A549 (cell line): ENCODE measurements at regions of chr1 and their contacts with region 1.

Region 1: GRCh38 chr1:235160957-235161684 is at the start of gene RBM34:
- DNase-seq: peak; percentile 89 to 93
- ATAC-seq: peak; percentile 96
- H3K4me3 ChIP-seq: peak within 1 kb of the TSS; percentile 79
- H3K27ac ChIP-seq: peak within 1 kb of the TSS; percentile 88 to 90
- H3K4me1 ChIP-seq: peaks cover 17% of the 10 kb centered on the region; the same call in 2 of the 3 replicates
- CTCF ChIP-seq: no peak
- EP300 ChIP-seq: no peak
- POLR2A ChIP-seq: peak; percentile 96
- RAD21 ChIP-seq: no peak; a peak in 1 of 5 replicates
- polyA plus RNA-seq, gene RBM34: 43.9 and 67.8 TPM in 2 replicates

Region 2: GRCh38 chr1:235145639-235146038 is 15.5 kb before region 1 on chr1:
- CTCF ChIA-PET with region 1: interaction called, 3 read pairs
- POLR2A ChIA-PET with region 1: interaction called, 12 read pairs
- DNase-seq: no peak
- ATAC-seq: 0 out of 6 replicates have a peak, but pooled peaks of 1 of the 2 experiments have one; percentile 19
- H3K4me3 ChIP-seq: no peak overlapping the region
- H3K27ac ChIP-seq: no peak overlapping the region
- H3K4me1 ChIP-seq: no peaks in the 10 kb centered on the region
- CTCF ChIP-seq: no peak
- EP300 ChIP-seq: no peak
- POLR2A ChIP-seq: no peak
- RAD21 ChIP-seq: no peak

Region 3: GRCh38 chr1:235151033-235151432 is 10.1 kb before region 1 on chr1:
- CTCF ChIA-PET with region 1: interaction called, 3 read pairs
- POLR2A ChIA-PET with region 1: interaction called, 12 read pairs
- DNase-seq: no peak
- ATAC-seq: no peak
- H3K4me3 ChIP-seq: no peak overlapping the region
- H3K27ac ChIP-seq: no peak overlapping the region
- H3K4me1 ChIP-seq: no peaks in the 10 kb centered on the region
- CTCF ChIP-seq: no peak
- EP300 ChIP-seq: no peak
- POLR2A ChIP-seq: no peak
- RAD21 ChIP-seq: no peak

Region 4: GRCh38 chr1:235336903-235337302 is 175.8 kb after region 1 on chr1:
- CTCF ChIA-PET with region 1: no interaction called
- POLR2A ChIA-PET with region 1: no interaction called
- DNase-seq: no peak
- ATAC-seq: no peak
- H3K4me3 ChIP-seq: no peak overlapping the region
- H3K27ac ChIP-seq: no peak overlapping the region
- H3K4me1 ChIP-seq: peaks cover 8% of the 10 kb centered on the region; the same call in 2 of the 3 replicates
- CTCF ChIP-seq: no peak
- EP300 ChIP-seq: no peak
- POLR2A ChIP-seq: no peak
- RAD21 ChIP-seq: no peak